Activated B cell treated with CpG ODN at 0.5 μM for 24 hours (primary cell): ENCODE measurements at regions of chr11 and their contacts with region 1.

Region 1: DNA sequence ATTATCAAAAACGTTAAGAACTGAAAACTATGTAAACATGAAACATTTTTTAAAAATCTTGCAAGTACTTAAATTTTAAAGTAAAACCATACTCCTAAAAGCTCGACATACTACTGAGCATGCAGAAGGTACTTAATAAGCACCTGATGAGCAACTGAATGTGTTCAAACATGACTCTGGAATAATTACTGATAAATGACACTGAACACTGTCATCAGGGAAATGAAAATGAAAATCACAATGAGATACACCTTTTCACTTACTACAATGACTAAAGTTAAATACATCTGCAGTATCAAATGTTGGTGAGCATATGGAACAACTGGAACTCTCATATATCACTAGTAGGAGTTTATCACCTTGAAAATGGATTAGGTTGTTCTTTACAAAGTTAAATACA is 65.2 kb downstream of the PICALM start:
- DNase-seq: no peak
- ATAC-seq: no peak
- H3K4me3 Mint-ChIP-seq: no peak overlapping the region
- H3K27ac Mint-ChIP-seq: no peak overlapping the region
- H3K4me1 Mint-ChIP-seq: no peaks in the 10 kb centered on the region
- H3K27me3 Mint-ChIP-seq: no peaks in the 10 kb centered on the region
- CTCF ChIP-seq: no peak

Region 2: DNA sequence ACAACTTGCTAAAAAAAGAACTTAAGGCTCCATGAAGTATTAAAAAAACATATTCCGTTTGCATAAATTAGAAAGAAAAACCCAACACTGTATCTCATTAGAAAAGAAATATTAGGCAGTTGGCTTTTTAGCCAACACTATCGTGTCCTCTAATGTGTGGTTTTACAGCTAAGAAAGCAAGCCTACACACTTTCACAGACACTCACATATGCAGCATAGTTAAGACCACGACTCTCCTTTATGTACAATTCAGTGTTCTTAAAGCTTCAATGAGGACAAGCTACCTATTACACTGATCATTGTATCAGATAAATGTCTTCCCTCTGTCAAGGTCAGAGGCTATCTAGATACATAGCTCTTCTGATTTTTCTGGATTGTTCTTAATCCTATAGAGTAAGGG is 14.9 kb before region 1 on chr11:
- CTCF ChIA-PET with region 1: interaction called, 3 read pairs
- POLR2A ChIA-PET with region 1: no interaction called
- intact Hi-C with region 1: loop called (anchors 2 kb)
- DNase-seq: no peak
- ATAC-seq: no peak
- H3K4me3 Mint-ChIP-seq: no peak overlapping the region
- H3K27ac Mint-ChIP-seq: no peak overlapping the region
- H3K4me1 Mint-ChIP-seq: peaks cover 4% of the 10 kb centered on the region
- H3K27me3 Mint-ChIP-seq: no peaks in the 10 kb centered on the region
- CTCF ChIP-seq: no peak